Activated naive CD4-positive, alpha-beta T cell treated with anti-CD3 and anti-CD28 coated beads for 36 hours (primary cell): ENCODE measurements at regions of chr12 and their contacts with region 1.

Region 1: DNA sequence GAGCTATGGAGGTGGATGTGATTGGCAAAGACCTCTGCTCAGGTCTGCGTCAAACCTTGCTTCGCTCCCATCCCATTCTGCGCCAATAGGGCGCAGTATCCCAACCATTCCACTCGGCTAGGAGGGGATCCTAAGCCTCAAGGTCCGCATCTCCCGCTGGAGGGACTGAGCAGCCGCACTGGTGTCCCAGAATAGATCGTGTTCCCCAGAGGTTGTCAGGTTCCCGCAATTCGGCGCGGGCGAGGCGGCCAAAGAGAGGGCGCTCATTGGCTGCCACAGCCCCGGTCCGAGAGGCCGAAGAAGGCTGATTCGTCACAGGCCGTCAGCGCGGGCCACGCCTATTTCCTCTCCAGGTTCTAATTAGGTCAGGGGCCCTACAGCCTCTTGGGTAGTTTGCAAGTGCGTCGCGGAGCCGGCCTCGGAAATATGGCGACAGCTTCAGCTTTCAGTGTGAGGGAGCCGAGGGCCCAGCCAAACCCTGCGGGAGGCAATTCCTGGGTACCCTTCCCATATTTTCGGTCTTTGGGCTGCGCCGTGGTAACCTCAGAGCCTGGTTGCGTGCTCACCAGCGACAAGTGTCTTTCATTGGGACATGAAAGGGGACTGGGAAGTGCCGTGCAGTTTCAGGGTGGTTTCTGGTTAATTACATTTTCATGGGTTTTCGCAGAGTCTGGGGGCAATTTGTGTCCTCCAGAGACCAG is 5.0 kb downstream of the OR10AD1 start:
- DNase-seq: peak; percentile 98
- H3K4me3 Mint-ChIP-seq: peak overlapping the region; percentile 85
- H3K27ac Mint-ChIP-seq: peak overlapping the region; percentile 99
- H3K4me1 Mint-ChIP-seq: peaks cover 34% of the 10 kb centered on the region
- H3K27me3 Mint-ChIP-seq: peaks cover 3% of the 10 kb centered on the region

Region 2: GRCh38 chr12:48105862-48106680 is 92.0 kb before region 1 on chr12 and contains the start of gene SENP1:
- CTCF ChIA-PET with region 1: interaction called, 6 read pairs
- intact Hi-C with region 1: loop called (anchors 1 kb)
- DNase-seq: peak; percentile 94
- H3K4me3 Mint-ChIP-seq: peak within 1 kb of the TSS; percentile 87
- H3K27ac Mint-ChIP-seq: peak within 1 kb of the TSS; percentile 96
- H3K4me1 Mint-ChIP-seq: peaks cover 47% of the 10 kb centered on the region
- H3K27me3 Mint-ChIP-seq: no peaks in the 10 kb centered on the region
- total RNA-seq, gene SENP1: 41.4 to 47.8 TPM

Region 3: GRCh38 chr12:48157018-48157888 is 40.9 kb before region 1 on chr12 and contains the start of gene ASB8:
- CTCF ChIA-PET with region 1: interaction called, 5 read pairs
- intact Hi-C with region 1: loop called (anchors 1 kb)
- DNase-seq: peak; percentile 100
- H3K4me3 Mint-ChIP-seq: peak within 1 kb of the TSS; percentile 93
- H3K27ac Mint-ChIP-seq: peak within 1 kb of the TSS; percentile 96
- H3K4me1 Mint-ChIP-seq: peaks cover 47% of the 10 kb centered on the region
- H3K27me3 Mint-ChIP-seq: no peaks in the 10 kb centered on the region
- total RNA-seq, gene ASB8: 36.7 to 47.9 TPM

Region 4: DNA sequence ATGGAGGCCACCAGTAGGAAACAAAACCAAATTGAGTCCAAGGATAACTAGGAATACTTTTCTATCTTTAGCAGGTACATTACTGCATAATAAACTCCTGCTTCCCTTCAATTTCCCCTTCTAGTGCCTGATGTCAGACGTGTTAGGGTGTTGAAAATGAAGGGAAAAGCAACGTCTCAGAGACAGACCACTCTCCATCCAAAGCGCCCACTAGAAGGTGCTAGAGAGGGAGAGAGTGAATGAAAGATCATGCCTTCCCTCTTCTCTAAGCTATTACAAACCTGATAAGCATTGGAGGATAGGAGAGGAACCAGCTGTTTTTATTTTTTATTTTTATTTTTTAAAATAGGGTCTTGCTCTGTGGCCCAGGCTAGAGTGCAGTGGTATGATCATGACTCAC is 88.5 kb after region 1 on chr12:
- CTCF ChIA-PET with region 1: interaction called, 3 read pairs
- intact Hi-C with region 1: loop called (anchors 1 kb)
- DNase-seq: peak; percentile 18
- H3K4me3 Mint-ChIP-seq: no peak overlapping the region
- H3K27ac Mint-ChIP-seq: peak overlapping the region; percentile 62
- H3K4me1 Mint-ChIP-seq: peaks cover 16% of the 10 kb centered on the region
- H3K27me3 Mint-ChIP-seq: no peaks in the 10 kb centered on the region

Region 5: DNA sequence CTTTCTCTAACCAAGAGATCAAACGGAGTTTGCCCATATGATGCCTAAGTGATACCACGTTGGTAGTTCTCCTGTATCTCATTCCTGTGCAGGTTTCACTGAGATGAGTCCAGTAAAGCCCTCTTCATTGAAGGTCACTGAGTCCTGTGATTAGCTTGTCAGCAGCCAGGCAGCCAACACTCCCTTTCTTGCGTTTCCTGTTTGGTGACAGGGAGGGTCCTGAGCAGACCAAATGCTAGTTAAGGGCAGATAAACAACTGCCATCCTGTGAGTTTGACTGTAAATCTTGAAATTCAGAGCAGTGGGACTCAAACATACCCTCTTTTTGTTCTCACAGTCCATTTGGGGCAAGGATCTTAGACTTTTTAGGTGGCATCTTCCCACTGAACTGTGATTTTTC is 113.2 kb after region 1 on chr12:
- CTCF ChIA-PET with region 1: no interaction called
- intact Hi-C with region 1: no loop called
- DNase-seq: no peak
- H3K4me3 Mint-ChIP-seq: no peak overlapping the region
- H3K27ac Mint-ChIP-seq: no peak overlapping the region
- H3K4me1 Mint-ChIP-seq: no peaks in the 10 kb centered on the region
- H3K27me3 Mint-ChIP-seq: no peaks in the 10 kb centered on the region

Region 6: GRCh38 chr12:48512855-48513254 is 314.7 kb after region 1 on chr12:
- CTCF ChIA-PET with region 1: no interaction called
- intact Hi-C with region 1: loop called (anchors 1 kb)
- DNase-seq: peak; percentile 61
- H3K4me3 Mint-ChIP-seq: peak overlapping the region; percentile 6
- H3K27ac Mint-ChIP-seq: peak overlapping the region; percentile 74
- H3K4me1 Mint-ChIP-seq: peaks cover 27% of the 10 kb centered on the region
- H3K27me3 Mint-ChIP-seq: no peaks in the 10 kb centered on the region